Transverse colon (tissue), 4 donors: ENCODE measurements at regions of chr18 and their contacts with region 1.

Region 1: GRCh38 chr18:57931038-57931437 is 113.0 kb upstream of the NEDD4L start:
- DNase-seq: peak; percentile 26
- H3K4me3 ChIP-seq: no peak overlapping the region
- H3K27ac ChIP-seq: no peak overlapping the region
- H3K4me1 ChIP-seq: peaks cover 0 to 6% (median 0%) of the 10 kb centered on the region in 4 donors
- H3K27me3 ChIP-seq: no peaks in the 10 kb centered on the region
- CTCF ChIP-seq: no peak
- EP300 ChIP-seq: no peak
- POLR2A ChIP-seq: no peak

Region 2: GRCh38 chr18:57982372-57983021 is 51.5 kb after region 1 on chr18:
- in situ Hi-C with region 1: no loop called
- intact Hi-C with region 1: loop called (anchors 2 kb)
- DNase-seq: no peak
- H3K4me3 ChIP-seq: no peak overlapping the region
- H3K27ac ChIP-seq: no peak overlapping the region
- H3K4me1 ChIP-seq: no peaks in the 10 kb centered on the region
- H3K27me3 ChIP-seq: no peaks in the 10 kb centered on the region
- CTCF ChIP-seq: no peak
- EP300 ChIP-seq: no peak
- POLR2A ChIP-seq: no peak

Region 3: DNA sequence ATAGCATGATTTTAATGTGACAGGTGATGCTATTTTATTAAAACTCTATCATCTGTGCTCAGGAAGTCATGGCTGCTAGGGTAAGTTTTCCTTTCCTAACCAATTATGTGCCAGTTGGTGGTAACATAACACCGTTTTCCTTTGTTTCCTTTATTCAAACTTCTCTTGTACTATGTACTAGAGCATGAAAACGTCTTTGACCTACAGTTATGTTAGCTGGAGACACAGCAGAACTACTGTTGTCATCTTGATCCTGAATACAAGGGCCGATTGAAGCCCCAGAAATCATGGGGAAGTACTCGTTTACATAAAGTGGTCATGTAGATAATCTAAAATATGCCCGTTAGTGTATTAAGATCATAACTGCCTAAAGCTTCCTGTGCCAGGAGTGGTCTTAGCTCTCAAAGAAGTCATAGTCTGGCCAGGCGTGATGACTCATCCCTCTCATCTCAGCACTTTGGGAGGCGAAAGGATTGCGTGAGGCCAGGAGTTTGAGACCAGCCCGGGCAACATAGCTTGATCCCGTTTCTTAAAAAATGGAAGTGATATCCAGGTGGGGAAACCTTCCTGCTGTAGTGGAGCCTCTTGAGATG is 133.5 kb after region 1 on chr18:
- in situ Hi-C with region 1: no loop called
- intact Hi-C with region 1: no loop called
- DNase-seq: no peak
- H3K4me3 ChIP-seq: no peak overlapping the region
- H3K27ac ChIP-seq: no peak overlapping the region
- H3K4me1 ChIP-seq: no peaks in the 10 kb centered on the region
- H3K27me3 ChIP-seq: no peaks in the 10 kb centered on the region
- CTCF ChIP-seq: no peak
- EP300 ChIP-seq: no peak
- POLR2A ChIP-seq: no peak